ENCODE measurements at regions of chr9 and their contacts with region 1.

Region 1: GRCh38 chr9:82721593-82721992 is 341.3 kb downstream of the RASEF start:
- DNase-seq: no peak
- ATAC-seq: no peak
- H3K4me3 ChIP-seq: no peak overlapping the region
- H3K27ac ChIP-seq: no peak overlapping the region
- H3K4me1 ChIP-seq: no peaks in the 10 kb centered on the region
- H3K27me3 ChIP-seq: no peaks in the 10 kb centered on the region
- CTCF ChIP-seq: no peak
- POLR2A ChIP-seq: no peak

Region 2: DNA sequence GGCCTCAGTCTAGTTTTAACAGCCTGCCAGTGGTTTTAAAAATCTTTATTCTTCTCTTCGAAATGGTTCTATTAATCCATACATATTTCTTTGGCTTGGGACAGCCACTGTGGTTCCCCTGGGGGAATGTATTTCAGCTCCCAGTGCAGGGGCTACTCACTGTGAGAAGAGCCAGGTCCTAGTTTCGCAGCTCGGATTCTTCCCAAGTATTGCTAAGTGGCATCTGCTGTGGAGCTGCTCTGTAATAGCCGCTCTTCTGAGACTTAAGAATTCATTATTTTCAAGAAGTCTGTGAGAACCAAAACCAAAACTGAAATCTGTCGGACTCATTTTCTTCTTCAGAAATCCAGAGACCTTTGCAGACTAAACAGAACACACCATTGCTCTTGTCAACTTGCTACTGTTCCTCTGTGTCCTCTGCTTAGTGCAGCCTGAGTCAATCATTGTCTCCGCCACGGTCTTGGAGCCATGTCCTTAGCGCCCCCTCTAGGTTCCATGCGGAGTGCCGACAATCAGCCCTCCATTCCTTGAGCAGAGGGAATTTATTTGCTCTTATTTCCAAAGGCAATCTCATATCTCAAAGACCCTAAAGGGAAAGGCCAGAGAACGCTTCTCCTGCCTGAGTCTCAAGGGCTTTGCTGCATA is 254.9 kb before region 1 on chr9:
- intact Hi-C with region 1: loop called in 1 of 10 experiments (anchors 5 kb)
- DNase-seq: peak in 2 of 5 donors; percentile 19 to 30
- ATAC-seq: peak in 1 of 4 donors; percentile 63
- H3K4me3 ChIP-seq: peak overlapping the region in 1 of 12 donors; percentile 15
- H3K27ac ChIP-seq: no peak overlapping the region
- H3K4me1 ChIP-seq: no peaks in the 10 kb centered on the region
- H3K27me3 ChIP-seq: no peaks in the 10 kb centered on the region
- CTCF ChIP-seq: peak in 6 of 12 donors; percentile 20 to 47 (median 38)
- POLR2A ChIP-seq: no peak

Region 3: GRCh38 chr9:83066771-83067170 is 345.2 kb after region 1 on chr9:
- intact Hi-C with region 1: no loop called
- DNase-seq: no peak
- ATAC-seq: no peak
- H3K4me3 ChIP-seq: no peak overlapping the region
- H3K27ac ChIP-seq: no peak overlapping the region
- H3K4me1 ChIP-seq: peaks cover 0 to 16% (median 10%) of the 10 kb centered on the region in 12 donors
- H3K27me3 ChIP-seq: peaks cover 15 to 43% (median 23%) of the 10 kb centered on the region in 9 donors
- CTCF ChIP-seq: no peak
- POLR2A ChIP-seq: no peak